ENCODE measurements at regions of chr10 and their contacts with region 1.

Region 1: DNA sequence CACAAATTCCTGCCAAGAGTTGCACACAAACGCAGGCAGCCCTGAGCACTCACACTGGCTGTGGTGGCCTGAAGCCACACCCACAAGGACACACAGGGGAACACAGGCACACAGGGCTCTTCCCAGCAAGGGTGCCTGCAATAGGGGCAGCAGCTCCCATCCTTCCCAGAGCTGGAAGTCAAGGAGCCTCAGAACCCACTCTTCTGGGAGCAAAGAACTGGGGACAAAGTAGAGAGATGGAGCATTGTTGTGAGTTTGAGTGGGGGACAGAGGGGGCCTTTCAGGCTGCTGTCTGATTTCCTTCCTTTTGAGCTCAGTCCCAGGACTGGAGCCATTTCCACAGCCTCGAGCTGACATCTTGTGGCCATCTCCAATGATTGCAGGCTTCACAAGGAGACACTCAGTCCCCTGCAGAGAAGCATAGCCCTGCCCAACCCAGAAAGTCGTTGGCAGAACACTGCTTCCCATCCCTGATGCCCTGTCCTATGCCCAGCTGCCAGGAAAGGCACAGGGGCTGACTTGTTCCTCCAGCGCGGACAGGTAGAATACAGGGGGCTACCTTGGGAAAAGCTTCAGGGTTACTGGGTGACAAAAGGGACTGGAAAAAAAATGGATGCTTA is 34.4 kb upstream of the SLF2 start:
- DNase-seq: peak; percentile 45 to 66 (median 56)
- ATAC-seq: peak; percentile 92
- H3K4me3 ChIP-seq: no peak overlapping the region
- H3K27ac ChIP-seq: no peak overlapping the region
- H3K4me1 ChIP-seq: peaks cover 0 to 4% of the 10 kb centered on the region in 2 experiments; a peak in 1 of 5 replicates
- H3K27me3 ChIP-seq: peaks cover 5 to 22% of the 10 kb centered on the region in 2 experiments; a peak in 4 of 5 replicates
- CTCF ChIP-seq: peak; percentile 65 to 73 (median 71)
- EP300 ChIP-seq: no peak
- POLR2A ChIP-seq: no peak
- RAD21 ChIP-seq: peak; percentile 45 to 73

Region 2: GRCh38 chr10:100346765-100347567 is 531.4 kb before region 1 on chr10 and contains the start of gene SCD:
- CTCF ChIA-PET with region 1: no interaction called
- POLR2A ChIA-PET with region 1: no interaction called
- in situ Hi-C with region 1: loop called (anchors 25 kb)
- intact Hi-C with region 1: loop called (anchors 10 kb)
- DNase-seq: peak; percentile 83 to 94 (median 88)
- ATAC-seq: peak; percentile 94
- H3K4me3 ChIP-seq: peak within 1 kb of the TSS; percentile 93
- H3K27ac ChIP-seq: peak within 1 kb of the TSS; percentile 82
- H3K4me1 ChIP-seq: peaks cover 23 to 37% of the 10 kb centered on the region in 2 experiments; a peak in 4 of 5 replicates
- H3K27me3 ChIP-seq: no peaks in the 10 kb centered on the region
- CTCF ChIP-seq: no peak
- EP300 ChIP-seq: no peak
- POLR2A ChIP-seq: peak; percentile 75
- RAD21 ChIP-seq: no peak
- polyA plus RNA-seq, gene SCD: 188 to 258 TPM

Region 3: GRCh38 chr10:100433253-100434240 is 444.9 kb before region 1 on chr10:
- CTCF ChIA-PET with region 1: interaction called, 4 read pairs
- POLR2A ChIA-PET with region 1: no interaction called
- in situ Hi-C with region 1: loop called (anchors 10 kb)
- intact Hi-C with region 1: loop called (anchors 2 kb)
- DNase-seq: peak; percentile 67 to 92 (median 72)
- ATAC-seq: peak; percentile 94
- H3K4me3 ChIP-seq: no peak overlapping the region
- H3K27ac ChIP-seq: no peak overlapping the region
- H3K4me1 ChIP-seq: peaks cover 0 to 2% of the 10 kb centered on the region in 2 experiments; a peak in 1 of 5 replicates
- H3K27me3 ChIP-seq: no peaks in the 10 kb centered on the region
- CTCF ChIP-seq: peak; percentile 98 to 99 (median 99)
- EP300 ChIP-seq: no peak
- POLR2A ChIP-seq: no peak
- RAD21 ChIP-seq: peak; percentile 99

Region 4: DNA sequence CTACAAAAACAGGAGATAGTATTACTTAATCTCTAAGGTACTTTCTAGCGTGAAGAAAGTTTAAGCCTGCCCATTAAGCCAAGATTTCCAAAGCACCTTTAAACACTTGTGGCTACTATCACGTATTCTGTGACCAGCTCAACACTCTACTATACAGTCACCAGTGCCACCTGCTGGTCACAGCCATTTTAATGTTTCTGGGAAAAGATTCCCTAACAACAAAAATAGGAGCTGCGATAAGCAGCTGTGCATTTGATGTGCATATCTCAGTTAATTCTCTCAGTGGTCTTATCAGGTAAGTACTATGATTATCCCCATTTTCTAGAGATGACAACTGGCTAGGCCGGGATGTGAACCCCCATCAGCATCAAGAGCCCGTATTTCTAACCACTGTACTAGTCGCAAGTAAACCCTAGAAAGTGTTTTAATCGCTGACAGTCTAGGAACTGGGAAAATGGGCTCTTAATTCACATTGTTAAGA is 359.6 kb before region 1 on chr10:
- CTCF ChIA-PET with region 1: no interaction called
- POLR2A ChIA-PET with region 1: no interaction called
- in situ Hi-C with region 1: no loop called
- intact Hi-C with region 1: loop called (anchors 5 kb)
- DNase-seq: peak; percentile 43 to 63 (median 48)
- ATAC-seq: peak; percentile 78
- H3K4me3 ChIP-seq: no peak overlapping the region
- H3K27ac ChIP-seq: no peak overlapping the region
- H3K4me1 ChIP-seq: peaks cover 2 to 3% of the 10 kb centered on the region in 2 experiments; a peak in 2 of 5 replicates
- H3K27me3 ChIP-seq: no peaks in the 10 kb centered on the region
- CTCF ChIP-seq: peak; percentile 61 to 73 (median 69)
- EP300 ChIP-seq: no peak
- POLR2A ChIP-seq: no peak
- RAD21 ChIP-seq: peak; percentile 37 to 62; a peak in 3 of 4 replicates

Region 5: GRCh38 chr10:100562008-100562711 is 316.2 kb before region 1 on chr10:
- CTCF ChIA-PET with region 1: interaction called, 9 read pairs
- POLR2A ChIA-PET with region 1: no interaction called
- in situ Hi-C with region 1: loop called (anchors 25 kb)
- intact Hi-C with region 1: loop called (anchors 2 kb)
- DNase-seq: peak; percentile 71 to 79 (median 72)
- ATAC-seq: peak; percentile 93
- H3K4me3 ChIP-seq: no peak overlapping the region
- H3K27ac ChIP-seq: no peak overlapping the region
- H3K4me1 ChIP-seq: peaks cover 3 to 12% of the 10 kb centered on the region in 2 experiments; a peak in 2 of 5 replicates
- H3K27me3 ChIP-seq: peaks cover 0 to 10% of the 10 kb centered on the region in 2 experiments; a peak in 1 of 5 replicates
- CTCF ChIP-seq: peak; percentile 83 to 99 (median 96)
- EP300 ChIP-seq: no peak
- POLR2A ChIP-seq: no peak
- RAD21 ChIP-seq: peak; percentile 62 to 77

Region 6: GRCh38 chr10:100766693-100767421 is 111.5 kb before region 1 on chr10:
- CTCF ChIA-PET with region 1: no interaction called
- POLR2A ChIA-PET with region 1: no interaction called
- in situ Hi-C with region 1: no loop called
- intact Hi-C with region 1: loop called (anchors 10 kb)
- DNase-seq: no peak
- ATAC-seq: no peak
- H3K4me3 ChIP-seq: no peak overlapping the region
- H3K27ac ChIP-seq: no peak overlapping the region
- H3K4me1 ChIP-seq: no peaks in the 10 kb centered on the region
- H3K27me3 ChIP-seq: peaks cover 0 to 19% of the 10 kb centered on the region in 2 experiments; a peak in 2 of 5 replicates
- CTCF ChIP-seq: no peak
- EP300 ChIP-seq: no peak
- POLR2A ChIP-seq: no peak
- RAD21 ChIP-seq: no peak

Region 7: DNA sequence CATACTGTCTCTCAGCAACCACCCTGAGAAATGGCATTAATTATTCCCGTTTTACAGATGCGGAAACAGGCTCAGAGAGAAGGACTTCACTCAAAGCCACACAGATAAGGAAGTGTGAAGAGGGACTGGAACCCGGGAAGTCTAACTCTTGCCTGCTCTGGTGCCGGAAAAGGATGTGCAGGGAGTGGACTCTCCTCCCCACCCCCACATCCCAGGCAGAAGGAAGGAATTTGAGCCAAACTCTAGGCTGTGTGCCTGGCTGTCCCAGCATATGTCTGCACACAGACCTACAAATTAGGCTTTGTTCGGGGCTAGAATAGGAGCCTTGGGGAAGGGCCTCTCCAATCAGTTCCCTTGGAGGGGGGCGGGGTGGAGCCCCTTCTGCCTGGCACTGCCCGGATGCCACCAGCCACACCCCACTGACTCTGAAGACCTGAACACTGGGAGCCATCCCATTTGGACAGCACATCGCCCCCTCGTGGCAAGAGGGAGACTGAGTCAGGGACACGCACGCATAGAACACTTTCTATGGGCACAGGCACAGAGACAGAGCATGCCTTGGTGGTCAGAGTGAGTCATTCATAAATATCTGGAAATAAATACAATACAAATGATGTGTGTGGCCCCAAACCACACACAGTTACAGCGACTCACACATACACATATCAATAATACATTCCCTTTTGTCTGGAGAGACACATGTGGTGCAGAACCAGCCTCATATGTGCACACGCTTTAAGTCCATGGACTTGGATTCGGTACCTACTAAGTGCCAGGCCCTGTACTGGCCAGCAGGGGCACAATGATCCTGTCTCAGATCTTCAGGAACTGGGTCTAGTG is 134.3 kb after region 1 on chr10:
- CTCF ChIA-PET with region 1: no interaction called
- POLR2A ChIA-PET with region 1: no interaction called
- in situ Hi-C with region 1: no loop called
- intact Hi-C with region 1: loop called (anchors 2 kb)
- DNase-seq: peak; percentile 51 to 75 (median 58)
- ATAC-seq: peak; percentile 78
- H3K4me3 ChIP-seq: no peak overlapping the region
- H3K27ac ChIP-seq: no peak overlapping the region
- H3K4me1 ChIP-seq: peaks cover 14 to 38% of the 10 kb centered on the region in 2 experiments; a peak in 4 of 5 replicates
- H3K27me3 ChIP-seq: no peaks in the 10 kb centered on the region
- CTCF ChIP-seq: peak; percentile 69 to 82 (median 72)
- EP300 ChIP-seq: no peak
- POLR2A ChIP-seq: no peak
- RAD21 ChIP-seq: peak; percentile 19 to 56; a peak in 2 of 4 replicates